Activated T-helper 1 cell treated with anti-CD3 and anti-CD28 coated beads, Interleukin-12 subunit alpha, Interleukin-12 subunit beta, Interleukin-2, Interleukin-4 antibody, amounts not matched to agents 30 ng/mL and 10 ng/mL and 1 ng/mL, durations not matched to agents 14 hours and 24 hours and 36 hours (primary cell): ENCODE measurements at regions of chr6 and their contacts with region 1.

Region 1: GRCh38 chr6:12011276-12012076 is 636 bp upstream of the HIVEP1 start:
- DNase-seq: peak; percentile 92
- H3K4me3 Mint-ChIP-seq: peak overlapping the region; percentile 97
- H3K27ac Mint-ChIP-seq: peak overlapping the region; percentile 97
- H3K4me1 Mint-ChIP-seq: peaks cover 62% of the 10 kb centered on the region
- H3K27me3 Mint-ChIP-seq: no peaks in the 10 kb centered on the region

Region 2: GRCh38 chr6:11732036-11732631 is 279.3 kb before region 1 on chr6:
- intact Hi-C with region 1: loop called (anchors 1 kb)
- DNase-seq: peak; percentile 25
- H3K4me3 Mint-ChIP-seq: peak overlapping the region; percentile 23
- H3K27ac Mint-ChIP-seq: peak overlapping the region; percentile 87
- H3K4me1 Mint-ChIP-seq: peaks cover 71% of the 10 kb centered on the region
- H3K27me3 Mint-ChIP-seq: no peaks in the 10 kb centered on the region

Region 3: DNA sequence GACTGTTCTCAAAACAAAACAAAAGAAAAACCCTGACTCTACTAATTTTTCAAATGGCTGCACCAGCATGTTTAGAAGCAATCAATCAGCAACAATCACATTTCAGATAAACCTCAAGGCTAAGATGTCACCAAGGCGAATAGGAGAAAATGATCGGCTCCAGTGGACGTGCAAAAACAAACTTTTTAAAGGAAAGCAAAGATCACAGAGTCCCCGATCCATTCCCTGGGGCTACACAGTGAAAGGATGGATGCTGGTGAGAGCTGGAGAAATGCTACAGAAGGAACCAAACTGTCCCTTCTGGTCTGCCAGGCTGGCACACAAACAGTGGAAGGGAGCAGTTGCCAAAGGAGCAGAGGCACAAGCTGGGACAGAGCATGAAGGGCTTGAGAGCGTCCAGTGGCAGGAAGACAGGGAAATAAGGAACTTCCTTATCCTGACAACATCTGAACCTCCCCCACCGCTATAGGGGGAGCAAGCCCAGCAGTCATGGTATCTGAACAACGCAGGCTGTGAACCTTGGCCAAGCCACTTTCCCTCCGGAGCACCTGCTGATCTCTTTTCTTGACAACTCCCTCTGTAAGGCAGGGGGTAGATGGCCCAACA is 73.1 kb before region 1 on chr6:
- intact Hi-C with region 1: loop called (anchors 5 kb)
- DNase-seq: no peak
- H3K4me3 Mint-ChIP-seq: no peak overlapping the region
- H3K27ac Mint-ChIP-seq: no peak overlapping the region
- H3K4me1 Mint-ChIP-seq: peaks cover 8% of the 10 kb centered on the region
- H3K27me3 Mint-ChIP-seq: peaks cover 2% of the 10 kb centered on the region

Region 4: GRCh38 chr6:12051861-12052368 is 40.4 kb after region 1 on chr6:
- intact Hi-C with region 1: loop called (anchors 1 kb)
- DNase-seq: peak; percentile 76
- H3K4me3 Mint-ChIP-seq: peak overlapping the region; percentile 78
- H3K27ac Mint-ChIP-seq: peak overlapping the region; percentile 96
- H3K4me1 Mint-ChIP-seq: peaks cover 77% of the 10 kb centered on the region
- H3K27me3 Mint-ChIP-seq: no peaks in the 10 kb centered on the region

Region 5: DNA sequence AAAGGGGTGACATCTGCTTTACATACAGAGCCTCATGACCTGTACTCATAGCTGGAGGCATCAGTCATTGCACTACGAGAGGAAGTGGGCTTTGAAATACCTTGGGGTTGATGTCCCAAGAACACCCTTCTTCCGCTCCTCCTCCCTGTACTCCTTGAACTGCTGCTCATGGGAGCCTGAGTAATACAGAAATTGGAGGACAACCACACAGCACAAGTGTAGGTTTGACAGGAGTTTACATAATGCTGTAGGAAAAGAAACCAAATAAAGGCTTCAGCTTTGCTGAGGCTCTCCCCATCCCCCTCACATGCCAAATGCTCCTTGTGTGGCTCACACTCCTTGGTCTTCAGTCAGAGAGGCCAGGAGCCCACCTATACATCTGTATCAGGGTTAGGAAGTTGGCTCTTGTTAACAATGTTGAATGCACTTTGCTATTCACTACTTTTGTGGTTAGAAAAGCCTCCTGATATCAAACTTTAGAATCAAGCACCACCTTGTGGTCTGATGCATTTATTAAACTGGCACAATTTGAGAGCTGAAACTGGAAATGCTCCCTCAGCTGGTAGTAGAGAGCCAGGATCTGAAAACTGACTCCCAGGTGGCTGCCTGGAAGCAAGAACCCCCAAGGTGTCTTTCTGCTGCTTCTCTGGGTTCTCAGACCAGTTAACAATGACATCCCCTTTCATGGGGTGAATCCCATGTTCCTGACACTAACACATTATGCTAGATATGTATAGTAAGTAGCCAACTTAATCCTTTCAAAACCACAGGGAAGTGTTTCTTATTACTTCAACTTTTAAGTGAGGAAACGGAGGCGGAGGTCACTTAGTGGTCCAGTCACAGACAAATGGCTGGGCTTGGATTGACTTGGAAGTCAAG is 222.5 kb after region 1 on chr6:
- intact Hi-C with region 1: loop called (anchors 2 kb)
- DNase-seq: peak; percentile 18
- H3K4me3 Mint-ChIP-seq: peak overlapping the region; percentile 16
- H3K27ac Mint-ChIP-seq: peak overlapping the region; percentile 31
- H3K4me1 Mint-ChIP-seq: peaks cover 55% of the 10 kb centered on the region
- H3K27me3 Mint-ChIP-seq: no peaks in the 10 kb centered on the region